Left ventricle myocardium superior (tissue), 1 donor: ENCODE measurements at regions of chr12 and their contacts with region 1.

Region 1: GRCh38 chr12:103548622-103549601 is 38.2 kb upstream of the STAB2 start:
- DNase-seq: peak; percentile 52
- ATAC-seq: peak; percentile 55

Region 2: DNA sequence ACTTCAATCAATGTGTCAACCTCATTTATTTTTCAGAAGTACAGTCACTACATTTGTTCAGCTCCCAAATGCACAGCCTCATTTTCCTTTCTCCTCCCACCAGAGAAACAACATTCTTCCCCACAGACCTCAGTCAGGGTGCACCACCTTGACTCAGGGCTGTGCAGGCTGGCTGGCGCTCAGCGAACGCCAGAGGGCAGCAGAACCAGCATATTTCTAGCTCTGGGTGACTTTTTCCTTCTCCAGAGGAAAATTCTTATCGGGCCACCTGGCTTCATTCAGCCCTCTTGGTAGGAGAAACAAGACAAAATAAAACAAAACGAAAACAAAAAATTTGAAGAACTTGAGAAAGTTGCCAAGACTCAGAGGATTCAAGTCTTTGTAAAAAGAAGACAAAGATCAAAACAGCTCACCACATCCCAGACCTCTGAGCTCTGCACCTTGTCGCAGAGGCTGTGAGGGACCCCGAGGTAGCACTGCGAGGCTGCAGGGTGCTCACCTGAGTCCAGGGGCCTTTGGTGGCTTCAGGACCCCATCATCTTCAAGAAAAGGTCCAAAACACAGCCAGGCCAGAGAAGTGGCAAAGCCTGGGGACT is 665.6 kb before region 1 on chr12:
- intact Hi-C with region 1: loop called (anchors 10 kb)
- DNase-seq: peak; percentile 63
- ATAC-seq: peak; percentile 61

Region 3: DNA sequence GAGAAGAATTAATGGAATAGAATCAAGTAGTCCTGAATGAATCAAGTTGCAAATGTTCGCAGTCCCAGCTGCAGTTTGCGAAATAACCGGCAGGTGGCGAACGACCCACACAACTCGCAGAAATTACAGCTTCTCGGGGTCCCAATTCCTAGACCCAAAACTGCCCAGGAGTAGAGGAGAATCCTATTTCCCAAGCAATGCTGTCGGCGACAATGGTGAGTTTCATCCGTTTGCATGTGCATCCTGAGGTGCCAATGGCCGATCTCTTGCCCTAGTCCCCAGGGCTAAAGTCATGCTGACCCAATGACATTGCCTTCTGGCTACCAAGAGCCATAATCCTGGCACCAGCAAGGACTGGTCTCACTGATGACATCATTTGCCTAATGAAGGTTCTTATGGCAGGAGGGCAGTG is 600.0 kb before region 1 on chr12:
- intact Hi-C with region 1: loop called (anchors 10 kb)
- DNase-seq: peak; percentile 58
- ATAC-seq: no peak

Region 4: DNA sequence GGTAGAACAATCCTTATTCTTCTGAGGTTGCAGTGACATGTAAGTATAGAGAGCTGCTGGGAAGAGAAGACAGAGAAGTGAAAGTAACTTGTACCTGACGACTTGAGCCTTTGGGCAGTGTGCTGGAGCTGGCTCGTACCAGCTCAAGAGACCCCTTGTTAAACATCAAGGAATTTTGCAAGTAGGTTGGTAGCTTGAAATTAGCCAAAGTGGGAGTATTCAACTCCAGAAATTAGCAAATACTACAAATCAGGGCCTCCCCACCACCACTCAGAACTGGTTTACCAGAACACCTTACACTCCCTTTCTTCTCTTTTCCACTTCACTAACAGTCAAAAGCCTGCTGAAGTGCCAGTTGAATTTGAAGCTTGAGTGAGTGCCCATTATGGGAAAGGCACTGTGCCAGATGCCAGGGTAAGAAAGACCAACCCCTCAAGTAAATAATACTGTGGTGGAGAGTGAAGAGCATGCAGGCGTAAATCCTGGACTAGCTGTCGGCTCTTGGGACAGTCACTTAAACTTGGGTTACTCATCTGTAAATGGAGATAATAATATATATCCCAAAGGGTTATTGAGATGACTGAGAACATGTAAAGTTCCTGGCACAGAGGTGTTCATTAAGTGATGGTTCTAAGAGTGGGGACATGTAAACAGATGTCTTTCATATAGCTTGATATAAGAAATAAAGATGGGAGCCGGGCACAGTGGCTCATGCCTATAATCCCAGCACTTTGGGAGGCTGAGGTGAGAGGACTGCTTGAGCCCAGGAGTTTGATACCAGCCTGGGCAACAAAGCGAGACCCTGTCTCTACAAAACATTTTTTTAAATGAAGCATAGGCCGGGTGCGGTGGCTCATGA is 727.6 kb after region 1 on chr12:
- intact Hi-C with region 1: no loop called
- DNase-seq: no peak
- ATAC-seq: peak; percentile 61